ENCODE measurements at regions of chr16 and their contacts with region 1.

Region 1: GRCh38 chr16:55257966-55258613 is 65.9 kb upstream of the IRX6 start:
- DNase-seq: peak; percentile 78
- H3K4me3 ChIP-seq: no peak overlapping the region
- H3K27ac ChIP-seq: no peak overlapping the region
- H3K4me1 ChIP-seq: no peaks in the 10 kb centered on the region
- H3K27me3 ChIP-seq: no peaks in the 10 kb centered on the region
- CTCF ChIP-seq: peak; percentile 92

Region 2: GRCh38 chr16:53549970-53550690 is 1708.0 kb before region 1 on chr16:
- CTCF ChIA-PET with region 1: no interaction called
- POLR2A ChIA-PET with region 1: no interaction called
- intact Hi-C with region 1: loop called (anchors 5 kb)
- DNase-seq: peak; percentile 90
- H3K4me3 ChIP-seq: no peak overlapping the region
- H3K27ac ChIP-seq: no peak overlapping the region
- H3K4me1 ChIP-seq: no peaks in the 10 kb centered on the region
- H3K27me3 ChIP-seq: no peaks in the 10 kb centered on the region
- CTCF ChIP-seq: peak; percentile 85

Region 3: GRCh38 chr16:53892155-53892554 is 1365.9 kb before region 1 on chr16:
- CTCF ChIA-PET with region 1: no interaction called
- POLR2A ChIA-PET with region 1: no interaction called
- intact Hi-C with region 1: loop called (anchors 5 kb)
- DNase-seq: peak; percentile 77
- H3K4me3 ChIP-seq: no peak overlapping the region
- H3K27ac ChIP-seq: no peak overlapping the region
- H3K4me1 ChIP-seq: peaks cover 42% of the 10 kb centered on the region
- H3K27me3 ChIP-seq: no peaks in the 10 kb centered on the region
- CTCF ChIP-seq: peak; percentile 85

Region 4: GRCh38 chr16:54633943-54634362 is 624.1 kb before region 1 on chr16:
- CTCF ChIA-PET with region 1: no interaction called
- POLR2A ChIA-PET with region 1: no interaction called
- intact Hi-C with region 1: loop called (anchors 10 kb)
- DNase-seq: peak; percentile 56
- H3K4me3 ChIP-seq: no peak overlapping the region
- H3K27ac ChIP-seq: no peak overlapping the region
- H3K4me1 ChIP-seq: peaks cover 12% of the 10 kb centered on the region
- H3K27me3 ChIP-seq: no peaks in the 10 kb centered on the region
- CTCF ChIP-seq: peak; percentile 76

Region 5: DNA sequence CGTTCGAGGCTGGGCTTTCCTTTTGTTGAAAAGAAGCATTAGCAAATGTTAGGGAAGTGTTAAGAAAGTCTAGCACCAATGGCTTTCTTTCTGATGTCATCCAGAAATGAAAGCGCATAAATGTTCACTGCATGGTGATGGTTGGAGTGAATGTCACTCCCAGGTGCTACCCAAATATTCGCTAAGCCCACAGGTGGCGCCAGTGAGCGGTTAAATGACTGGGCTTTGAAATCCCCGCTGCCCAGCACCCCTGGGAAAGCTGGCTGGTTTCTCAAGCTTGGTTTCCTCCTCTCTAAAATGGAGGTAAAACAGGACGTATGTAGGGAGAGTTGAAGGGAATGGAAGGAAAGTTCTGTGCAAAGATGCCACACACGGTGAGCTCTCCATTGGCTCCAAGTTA is 223.1 kb before region 1 on chr16:
- CTCF ChIA-PET with region 1: interaction called, 3 read pairs
- POLR2A ChIA-PET with region 1: no interaction called
- intact Hi-C with region 1: loop called (anchors 1 kb)
- DNase-seq: peak; percentile 68
- H3K4me3 ChIP-seq: no peak overlapping the region
- H3K27ac ChIP-seq: no peak overlapping the region
- H3K4me1 ChIP-seq: no peaks in the 10 kb centered on the region
- H3K27me3 ChIP-seq: no peaks in the 10 kb centered on the region
- CTCF ChIP-seq: peak; percentile 76

Region 6: GRCh38 chr16:55271945-55272513 is 13.9 kb after region 1 on chr16:
- CTCF ChIA-PET with region 1: no interaction called
- POLR2A ChIA-PET with region 1: no interaction called
- intact Hi-C with region 1: no loop called
- DNase-seq: no peak
- H3K4me3 ChIP-seq: no peak overlapping the region
- H3K27ac ChIP-seq: no peak overlapping the region
- H3K4me1 ChIP-seq: no peaks in the 10 kb centered on the region
- H3K27me3 ChIP-seq: no peaks in the 10 kb centered on the region
- CTCF ChIP-seq: no peak